Right ventricle myocardium inferior (tissue), 1 donor: ENCODE measurements at regions of chr13 and their contacts with region 1.

Region 1: GRCh38 chr13:28636674-28637317 is 22.1 kb upstream of the POMP start:
- DNase-seq: no peak
- ATAC-seq: peak; percentile 72

Region 2: DNA sequence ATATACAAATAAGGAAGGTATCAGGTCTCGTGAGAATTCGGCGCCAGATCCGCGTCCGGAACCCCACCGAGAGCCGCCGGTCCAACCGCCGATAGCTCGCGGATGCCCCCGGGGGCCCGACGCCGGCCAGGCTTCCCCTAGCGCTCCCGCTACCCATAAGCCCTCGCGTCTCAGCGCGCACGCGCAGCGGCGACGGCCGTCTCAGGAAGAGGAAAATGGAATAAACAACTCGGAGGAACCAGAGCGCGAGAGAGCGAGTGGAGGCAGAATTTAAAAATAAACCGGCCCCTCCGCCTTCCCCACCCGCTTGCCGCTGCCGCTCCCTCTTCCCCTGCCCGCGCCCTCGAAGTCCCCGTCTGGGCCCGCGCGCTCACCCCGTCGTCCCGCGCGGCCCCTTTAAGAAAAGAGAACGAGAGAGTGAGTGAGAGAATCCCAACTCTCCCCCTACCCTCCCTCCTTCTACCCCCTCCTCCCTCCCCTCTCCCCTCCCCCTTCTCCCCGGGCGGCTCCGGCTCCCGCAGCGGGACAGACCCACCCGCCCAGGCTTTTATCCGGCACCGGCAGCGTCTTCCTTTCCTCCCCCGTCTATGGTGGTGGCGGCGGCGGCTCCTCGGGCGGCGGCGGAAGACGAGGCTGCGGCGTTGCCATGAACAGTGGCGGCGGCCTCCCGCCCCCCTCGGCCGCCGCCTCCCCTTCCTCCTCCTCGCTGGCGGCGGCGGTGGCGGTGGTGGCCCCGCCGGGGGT is 498.6 kb before region 1 on chr13 and contains the start of gene PAN3:
- intact Hi-C with region 1: loop called (anchors 5 kb)
- DNase-seq: peak; percentile 98
- ATAC-seq: peak; percentile 90
- total RNA-seq, gene PAN3: 8.7 TPM

Region 3: DNA sequence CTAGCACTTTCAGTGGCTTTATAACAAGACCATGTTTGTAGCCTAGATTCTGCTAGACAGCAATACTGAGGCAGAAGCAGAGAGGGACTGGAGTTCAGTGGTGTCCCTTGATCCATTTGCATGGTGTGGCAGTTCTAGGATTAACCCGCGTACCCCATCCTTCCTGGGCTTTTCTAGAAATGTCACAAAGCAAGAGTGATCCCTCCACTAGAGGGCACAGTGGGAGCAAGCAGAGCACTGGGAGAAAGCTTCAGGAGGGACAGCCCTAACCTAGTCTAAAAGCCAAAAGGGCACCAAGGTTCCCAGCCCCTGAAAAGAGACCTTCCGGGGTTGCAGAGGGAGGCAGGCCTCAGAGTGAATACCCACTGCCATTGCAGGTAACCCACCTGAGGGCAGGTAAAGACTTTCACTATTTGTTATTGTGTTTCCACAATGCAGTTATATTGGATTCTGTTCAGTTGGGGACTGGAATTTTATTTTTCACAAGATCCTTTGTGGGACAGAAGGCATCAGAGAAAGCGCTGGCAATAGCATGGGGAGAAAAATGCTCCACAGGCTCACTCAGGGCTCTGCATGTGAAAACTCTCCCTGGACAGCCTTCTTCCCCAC is 312.5 kb before region 1 on chr13:
- intact Hi-C with region 1: loop called (anchors 1 kb)
- DNase-seq: no peak
- ATAC-seq: peak; percentile 74

Region 4: GRCh38 chr13:28494776-28495537 is 141.8 kb before region 1 on chr13 and contains the start of gene FLT1:
- intact Hi-C with region 1: loop called (anchors 5 kb)
- DNase-seq: peak; percentile 79
- ATAC-seq: peak; percentile 69
- total RNA-seq, gene FLT1: 41.0 TPM

Region 5: GRCh38 chr13:28531077-28531844 is 105.5 kb before region 1 on chr13:
- intact Hi-C with region 1: loop called (anchors 2 kb)
- DNase-seq: peak; percentile 75
- ATAC-seq: peak; percentile 35